ENCODE measurements at regions of chr10 and their contacts with region 1.

Region 1: DNA sequence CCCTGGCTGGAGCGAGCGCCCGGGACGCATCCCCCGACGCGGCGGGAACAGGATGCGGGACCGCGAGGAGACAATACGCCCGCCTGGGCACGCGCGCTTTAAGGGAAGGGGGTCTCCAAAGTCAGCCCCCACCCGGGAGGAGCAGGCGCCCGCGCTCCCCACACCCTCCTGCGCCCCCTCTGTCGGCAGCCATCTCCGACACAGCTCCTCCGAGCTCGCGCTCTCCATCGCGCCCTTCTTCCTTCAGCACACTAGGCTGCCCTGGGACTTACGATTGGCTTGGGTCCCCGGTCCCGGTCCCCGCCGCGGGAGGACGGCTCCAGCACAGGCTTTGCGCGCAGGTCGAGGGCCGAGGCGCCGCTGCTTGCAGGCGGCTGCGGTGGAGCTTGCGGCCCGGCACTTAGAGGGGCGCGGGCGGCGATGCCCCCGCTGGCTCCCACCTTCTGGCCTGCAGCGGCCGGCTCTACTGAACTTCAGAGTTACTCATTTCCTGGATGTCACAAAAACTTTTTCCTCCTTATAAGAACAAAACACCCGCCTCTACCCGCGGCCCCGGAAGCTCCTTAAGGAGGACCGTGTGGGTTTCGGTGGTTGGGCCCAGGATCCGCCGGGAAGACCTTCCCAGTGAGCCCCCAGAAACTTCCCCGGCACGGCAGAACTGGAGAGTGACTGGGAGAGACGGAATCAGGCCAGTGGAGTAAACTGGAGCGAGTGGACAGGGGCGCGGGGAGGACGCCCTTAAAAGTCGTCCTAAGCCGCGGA is at the start of gene ITPRIP:
- DNase-seq: peak; percentile 81
- H3K4me3 Mint-ChIP-seq: peak within 1 kb of the TSS; percentile 82
- H3K27ac Mint-ChIP-seq: peak within 1 kb of the TSS; percentile 90
- H3K4me1 Mint-ChIP-seq: peaks cover 48% of the 10 kb centered on the region
- H3K27me3 Mint-ChIP-seq: no peaks in the 10 kb centered on the region
- total RNA-seq, gene ITPRIP: 15.6 to 16.6 TPM

Region 2: DNA sequence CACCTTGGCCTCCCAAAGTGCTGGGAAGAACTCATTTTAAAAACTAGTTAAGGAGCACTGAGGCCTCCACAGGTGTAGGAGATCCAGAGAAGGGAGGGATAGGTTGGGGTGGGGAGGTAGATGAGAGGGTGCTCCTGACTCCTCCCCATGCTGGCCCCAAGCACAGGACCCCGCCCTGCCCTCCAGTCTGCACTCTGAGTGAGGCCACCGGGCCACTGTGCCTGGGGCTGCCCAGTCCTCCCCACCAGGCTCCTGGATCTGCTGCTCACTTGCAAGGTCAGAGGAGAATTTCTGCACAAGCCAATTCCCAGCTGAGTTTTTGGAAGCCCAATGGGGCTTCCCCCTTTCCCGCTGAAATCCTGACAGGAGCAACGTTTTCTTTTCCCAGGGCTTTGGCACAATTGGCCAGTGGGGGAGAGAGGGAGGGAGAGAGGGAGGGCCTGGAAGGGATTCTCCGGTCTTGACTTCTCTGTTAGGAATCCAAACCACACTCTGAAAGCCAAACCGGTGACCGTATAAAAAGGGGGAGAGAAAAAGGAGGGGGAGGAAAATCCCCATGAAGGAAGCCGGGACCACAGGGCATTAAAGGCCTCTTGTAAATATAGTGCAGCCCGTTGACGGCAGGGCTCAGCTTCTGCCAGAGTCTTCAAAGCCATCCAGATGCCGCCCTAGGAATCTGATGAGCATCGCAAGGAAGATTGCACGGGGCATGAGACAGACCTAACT is 599.0 kb before region 1 on chr10:
- CTCF ChIA-PET with region 1: no interaction called
- POLR2A ChIA-PET with region 1: no interaction called
- intact Hi-C with region 1: no loop called
- DNase-seq: no peak
- H3K4me3 Mint-ChIP-seq: no peak overlapping the region
- H3K27ac Mint-ChIP-seq: no peak overlapping the region
- H3K4me1 Mint-ChIP-seq: peaks cover 2% of the 10 kb centered on the region
- H3K27me3 Mint-ChIP-seq: no peaks in the 10 kb centered on the region

Region 3: GRCh38 chr10:104322416-104322782 is 15.8 kb before region 1 on chr10:
- CTCF ChIA-PET with region 1: interaction called, 6 read pairs
- POLR2A ChIA-PET with region 1: interaction called, 4 read pairs
- intact Hi-C with region 1: loop called (anchors 2 kb)
- DNase-seq: peak; percentile 64
- H3K4me3 Mint-ChIP-seq: peak overlapping the region; percentile 10
- H3K27ac Mint-ChIP-seq: peak overlapping the region; percentile 80
- H3K4me1 Mint-ChIP-seq: peaks cover 83% of the 10 kb centered on the region
- H3K27me3 Mint-ChIP-seq: no peaks in the 10 kb centered on the region

Region 4: GRCh38 chr10:104424719-104425118 is 86.6 kb after region 1 on chr10:
- CTCF ChIA-PET with region 1: no interaction called
- POLR2A ChIA-PET with region 1: no interaction called
- intact Hi-C with region 1: no loop called
- DNase-seq: peak; percentile 15
- H3K4me3 Mint-ChIP-seq: no peak overlapping the region
- H3K27ac Mint-ChIP-seq: no peak overlapping the region
- H3K4me1 Mint-ChIP-seq: no peaks in the 10 kb centered on the region
- H3K27me3 Mint-ChIP-seq: peaks cover 2% of the 10 kb centered on the region